H1 (cell line): ENCODE measurements at regions of chr6 and their contacts with region 1.

Region 1: GRCh38 chr6:42547407-42548329 is 16.2 kb upstream of the UBR2 start:
- DNase-seq: peak in 1 of 2 experiments; percentile 97
- H3K4me3 ChIP-seq: peak overlapping the region; percentile 32 to 58 (median 48); a peak in 7 of 8 replicates
- H3K27ac ChIP-seq: no peak overlapping the region
- H3K4me1 ChIP-seq: no peaks in the 10 kb centered on the region; a peak in 2 of 7 replicates
- H3K27me3 ChIP-seq: no peaks in the 10 kb centered on the region
- CTCF ChIP-seq: peak; percentile 95 to 98 (median 97)
- EP300 ChIP-seq: no peak
- POLR2A ChIP-seq: no peak
- RAD21 ChIP-seq: peak; percentile 95 to 97

Region 2: GRCh38 chr6:42306439-42307140 is 241.1 kb before region 1 on chr6:
- CTCF ChIA-PET with region 1: interaction called, 17 read pairs
- POLR2A ChIA-PET with region 1: interaction called, 4 read pairs
- DNase-seq: no peak
- H3K4me3 ChIP-seq: no peak overlapping the region
- H3K27ac ChIP-seq: no peak overlapping the region
- H3K4me1 ChIP-seq: peaks cover 0 to 11% (median 5%) of the 10 kb centered on the region in 4 experiments; a peak in 4 of 7 replicates
- H3K27me3 ChIP-seq: no peaks in the 10 kb centered on the region
- CTCF ChIP-seq: no peak
- EP300 ChIP-seq: no peak
- POLR2A ChIP-seq: no peak
- RAD21 ChIP-seq: no peak

Region 3: GRCh38 chr6:42440778-42441696 is 106.6 kb before region 1 on chr6:
- CTCF ChIA-PET with region 1: interaction called, 19 read pairs
- POLR2A ChIA-PET with region 1: no interaction called
- DNase-seq: peak in 1 of 2 experiments; percentile 37
- H3K4me3 ChIP-seq: peak overlapping the region; percentile 12 to 54 (median 32); a peak in 7 of 8 replicates
- H3K27ac ChIP-seq: peak overlapping the region; percentile 47; the same call in 1 of the 2 replicates
- H3K4me1 ChIP-seq: peaks cover 32 to 61% (median 44%) of the 10 kb centered on the region in 4 experiments
- H3K27me3 ChIP-seq: no peaks in the 10 kb centered on the region
- CTCF ChIP-seq: no peak
- EP300 ChIP-seq: no peak
- POLR2A ChIP-seq: no peak
- RAD21 ChIP-seq: no peak

Region 4: GRCh38 chr6:42511803-42512422 is 35.8 kb before region 1 on chr6:
- CTCF ChIA-PET with region 1: interaction called, 21 read pairs
- POLR2A ChIA-PET with region 1: no interaction called
- DNase-seq: no peak
- H3K4me3 ChIP-seq: no peak overlapping the region
- H3K27ac ChIP-seq: no peak overlapping the region
- H3K4me1 ChIP-seq: no peaks in the 10 kb centered on the region
- H3K27me3 ChIP-seq: no peaks in the 10 kb centered on the region; a peak in 1 of 7 replicates
- CTCF ChIP-seq: no peak
- EP300 ChIP-seq: no peak
- POLR2A ChIP-seq: no peak
- RAD21 ChIP-seq: no peak

Region 5: GRCh38 chr6:42563697-42564505 is 16.2 kb after region 1 on chr6 and contains the start of gene UBR2:
- CTCF ChIA-PET with region 1: interaction called, 30 read pairs
- POLR2A ChIA-PET with region 1: interaction called, 18 read pairs
- DNase-seq: peak; percentile 89
- H3K4me3 ChIP-seq: peak within 1 kb of the TSS; percentile 65 to 98 (median 90)
- H3K27ac ChIP-seq: peak within 1 kb of the TSS; percentile 88
- H3K4me1 ChIP-seq: no peaks in the 10 kb centered on the region; a peak in 3 of 7 replicates
- H3K27me3 ChIP-seq: no peaks in the 10 kb centered on the region
- CTCF ChIP-seq: peak; percentile 37 to 67 (median 54)
- EP300 ChIP-seq: peak in 1 of 2 experiments; percentile 31; a peak in 1 of 3 replicates
- POLR2A ChIP-seq: peak; percentile 85 to 88
- RAD21 ChIP-seq: 0 out of 4 replicates have a peak, but pooled peaks have one; percentile 13 to 24
- total RNA-seq, gene UBR2: 17.2 and 19.5 TPM in 2 replicates